GM13977 (cell line): ENCODE measurements at regions of chr9 and their contacts with region 1.

Region 1: GRCh38 chr9:36102742-36103495 is 33.6 kb upstream of the GLIPR2 start:
- DNase-seq: peak; percentile 75
- CTCF ChIP-seq: peak; percentile 87

Region 2: GRCh38 chr9:36166101-36166927 is 63.4 kb after region 1 on chr9:
- in situ Hi-C with region 1: loop called (anchors 5 kb)
- DNase-seq: peak; percentile 93
- CTCF ChIP-seq: peak; percentile 97